ENCODE measurements at regions of chr5 and their contacts with region 1.

Region 1: DNA sequence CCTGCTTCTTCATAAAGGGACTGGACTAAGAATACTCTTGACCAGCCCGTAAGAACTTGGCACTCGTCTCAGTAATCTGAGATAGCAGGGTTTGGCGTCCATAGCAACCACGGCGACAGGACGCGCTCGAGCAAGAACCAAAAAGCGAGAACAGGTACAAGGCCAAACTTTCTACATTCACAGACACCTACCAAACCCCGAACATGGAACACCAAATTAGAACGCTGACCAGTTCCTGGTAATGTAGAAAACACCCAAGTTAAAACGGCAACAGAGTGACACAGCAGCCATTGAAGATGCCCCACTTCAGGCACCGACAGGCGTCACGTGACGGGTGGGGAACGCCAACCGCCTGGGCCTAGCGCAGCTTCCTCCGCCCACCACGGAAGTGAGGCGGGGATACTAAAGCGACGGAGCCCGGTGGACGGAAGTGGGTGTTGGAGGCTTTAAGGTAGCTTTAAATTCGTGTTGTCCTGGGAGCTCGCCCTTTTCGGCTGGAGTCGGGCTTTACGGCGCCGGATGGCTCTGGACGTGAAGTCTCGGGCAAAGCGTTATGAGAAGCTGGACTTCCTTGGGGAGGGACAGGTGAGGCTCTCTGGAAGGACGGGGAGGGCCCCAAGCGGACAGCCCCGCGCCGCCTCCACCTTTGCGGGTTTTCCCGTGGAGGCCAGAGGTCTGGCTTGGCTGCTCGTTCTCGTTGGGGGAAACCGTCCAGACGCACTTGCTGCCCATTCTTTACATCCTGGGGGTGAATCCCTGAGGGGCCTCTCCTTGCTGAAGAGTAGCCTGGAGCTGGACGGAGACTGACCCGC is at the start of gene CDK7:
- DNase-seq: peak; percentile 95
- H3K4me3 ChIP-seq: peak within 1 kb of the TSS; percentile 50 to 98 (median 79)
- H3K27ac ChIP-seq: peak within 1 kb of the TSS; percentile 57
- H3K4me1 ChIP-seq: peaks cover 33% of the 10 kb centered on the region
- H3K27me3 ChIP-seq: no peaks in the 10 kb centered on the region
- CTCF ChIP-seq: no peak
- POLR2A ChIP-seq: peak; percentile 95
- total RNA-seq, gene CDK7: 33.4 and 38.1 TPM in 2 replicates

Region 2: GRCh38 chr5:68884883-68885282 is 349.8 kb before region 1 on chr5:
- CTCF ChIA-PET with region 1: no interaction called
- POLR2A ChIA-PET with region 1: no interaction called
- dilution Hi-C with region 1: no loop called
- intact Hi-C with region 1: no loop called
- DNase-seq: peak; percentile 5
- H3K4me3 ChIP-seq: no peak overlapping the region
- H3K27ac ChIP-seq: no peak overlapping the region
- H3K4me1 ChIP-seq: no peaks in the 10 kb centered on the region
- H3K27me3 ChIP-seq: no peaks in the 10 kb centered on the region
- CTCF ChIP-seq: peak in 1 of 2 donors; percentile 1
- POLR2A ChIP-seq: no peak

Region 3: GRCh38 chr5:68953875-68954617 is 280.6 kb before region 1 on chr5:
- CTCF ChIA-PET with region 1: no interaction called
- POLR2A ChIA-PET with region 1: no interaction called
- dilution Hi-C with region 1: no loop called
- intact Hi-C with region 1: no loop called
- DNase-seq: no peak
- H3K4me3 ChIP-seq: no peak overlapping the region
- H3K27ac ChIP-seq: no peak overlapping the region
- H3K4me1 ChIP-seq: no peaks in the 10 kb centered on the region
- H3K27me3 ChIP-seq: peaks cover 0 to 6% of the 10 kb centered on the region in 2 experiments
- CTCF ChIP-seq: no peak
- POLR2A ChIP-seq: no peak

Region 4: DNA sequence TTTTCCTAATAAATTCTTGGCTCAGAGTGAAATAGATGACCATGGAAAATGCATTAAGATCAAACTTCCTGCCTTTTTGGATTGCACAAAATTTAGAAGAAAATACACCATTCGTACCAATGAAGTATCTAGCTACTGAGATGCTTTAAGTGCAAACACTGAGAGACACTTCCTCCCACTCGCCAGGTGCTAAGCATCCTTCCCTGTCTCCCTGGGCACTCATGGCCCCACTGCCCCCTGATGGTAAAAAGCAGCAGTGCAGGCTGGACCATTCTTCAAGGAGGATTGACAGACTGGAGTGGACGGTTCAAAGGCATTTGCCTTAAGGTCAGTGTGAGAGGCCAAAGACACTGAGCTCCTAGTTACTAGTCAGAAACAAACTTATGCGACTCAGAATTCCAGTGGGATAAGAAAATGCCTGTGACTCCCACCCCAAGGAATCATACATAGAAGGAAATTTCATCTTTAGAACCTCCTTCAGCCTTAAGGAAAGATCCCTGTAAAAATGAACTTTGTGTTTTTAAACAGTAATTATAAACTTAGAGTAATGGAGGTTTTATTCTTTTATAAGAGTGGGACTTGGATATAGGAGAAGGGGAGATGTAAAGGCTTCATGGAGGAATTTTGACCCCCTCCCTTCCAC is 226.8 kb before region 1 on chr5:
- CTCF ChIA-PET with region 1: no interaction called
- POLR2A ChIA-PET with region 1: no interaction called
- dilution Hi-C with region 1: no loop called
- intact Hi-C with region 1: no loop called
- DNase-seq: peak; percentile 36
- H3K4me3 ChIP-seq: no peak overlapping the region
- H3K27ac ChIP-seq: no peak overlapping the region
- H3K4me1 ChIP-seq: no peaks in the 10 kb centered on the region
- H3K27me3 ChIP-seq: peaks cover 9 to 14% of the 10 kb centered on the region in 2 experiments
- CTCF ChIP-seq: peak; percentile 70 to 73
- POLR2A ChIP-seq: no peak

Region 5: GRCh38 chr5:69189162-69190086 is 45.2 kb before region 1 on chr5 and contains the start of gene CENPH:
- CTCF ChIA-PET with region 1: no interaction called
- POLR2A ChIA-PET with region 1: no interaction called
- dilution Hi-C with region 1: no loop called
- intact Hi-C with region 1: loop called (anchors 1 kb)
- DNase-seq: peak; percentile 92
- H3K4me3 ChIP-seq: peak within 1 kb of the TSS; percentile 56 to 91 (median 80)
- H3K27ac ChIP-seq: peak within 1 kb of the TSS; percentile 73
- H3K4me1 ChIP-seq: peaks cover 12% of the 10 kb centered on the region
- H3K27me3 ChIP-seq: no peaks in the 10 kb centered on the region
- CTCF ChIP-seq: no peak
- POLR2A ChIP-seq: peak; percentile 78
- total RNA-seq, gene CENPH: 16.4 and 17.1 TPM in 2 replicates

Region 6: GRCh38 chr5:69217548-69218526 is 16.8 kb before region 1 on chr5:
- CTCF ChIA-PET with region 1: interaction called, 4 read pairs
- POLR2A ChIA-PET with region 1: interaction called, 7 read pairs
- dilution Hi-C with region 1: no loop called
- intact Hi-C with region 1: loop called (anchors 2 kb)
- DNase-seq: peak; percentile 92
- H3K4me3 ChIP-seq: peak overlapping the region; percentile 1 to 80 (median 52)
- H3K27ac ChIP-seq: peak overlapping the region; percentile 33
- H3K4me1 ChIP-seq: peaks cover 7% of the 10 kb centered on the region
- H3K27me3 ChIP-seq: no peaks in the 10 kb centered on the region
- CTCF ChIP-seq: peak in 1 of 2 donors; percentile 28
- POLR2A ChIP-seq: peak; percentile 75

Region 7: DNA sequence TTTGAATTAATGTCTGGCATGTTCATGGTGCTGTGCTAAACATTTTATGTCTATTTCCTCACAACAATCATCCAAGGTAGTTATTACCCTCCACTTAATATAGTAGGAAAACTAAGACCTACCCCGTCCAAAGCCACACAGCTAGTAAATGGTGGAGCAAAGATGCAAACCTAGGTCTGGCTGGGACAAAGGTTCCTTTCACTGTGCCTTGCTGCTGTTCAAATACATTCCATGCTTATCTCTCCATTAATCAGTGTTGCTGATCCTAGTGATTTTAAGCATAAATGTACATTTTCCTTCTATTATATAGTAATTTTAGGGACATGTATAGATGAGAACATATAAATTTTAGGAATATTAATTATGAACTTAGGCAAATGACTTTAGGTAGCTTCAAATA is 59.2 kb after region 1 on chr5:
- CTCF ChIA-PET with region 1: no interaction called
- POLR2A ChIA-PET with region 1: no interaction called
- dilution Hi-C with region 1: no loop called
- intact Hi-C with region 1: loop called (anchors 2 kb)
- DNase-seq: no peak
- H3K4me3 ChIP-seq: no peak overlapping the region
- H3K27ac ChIP-seq: no peak overlapping the region
- H3K4me1 ChIP-seq: peaks cover 8% of the 10 kb centered on the region
- H3K27me3 ChIP-seq: no peaks in the 10 kb centered on the region
- CTCF ChIP-seq: no peak
- POLR2A ChIP-seq: no peak